ENCODE measurements at regions of chr4 and their contacts with region 1.

Region 1: DNA sequence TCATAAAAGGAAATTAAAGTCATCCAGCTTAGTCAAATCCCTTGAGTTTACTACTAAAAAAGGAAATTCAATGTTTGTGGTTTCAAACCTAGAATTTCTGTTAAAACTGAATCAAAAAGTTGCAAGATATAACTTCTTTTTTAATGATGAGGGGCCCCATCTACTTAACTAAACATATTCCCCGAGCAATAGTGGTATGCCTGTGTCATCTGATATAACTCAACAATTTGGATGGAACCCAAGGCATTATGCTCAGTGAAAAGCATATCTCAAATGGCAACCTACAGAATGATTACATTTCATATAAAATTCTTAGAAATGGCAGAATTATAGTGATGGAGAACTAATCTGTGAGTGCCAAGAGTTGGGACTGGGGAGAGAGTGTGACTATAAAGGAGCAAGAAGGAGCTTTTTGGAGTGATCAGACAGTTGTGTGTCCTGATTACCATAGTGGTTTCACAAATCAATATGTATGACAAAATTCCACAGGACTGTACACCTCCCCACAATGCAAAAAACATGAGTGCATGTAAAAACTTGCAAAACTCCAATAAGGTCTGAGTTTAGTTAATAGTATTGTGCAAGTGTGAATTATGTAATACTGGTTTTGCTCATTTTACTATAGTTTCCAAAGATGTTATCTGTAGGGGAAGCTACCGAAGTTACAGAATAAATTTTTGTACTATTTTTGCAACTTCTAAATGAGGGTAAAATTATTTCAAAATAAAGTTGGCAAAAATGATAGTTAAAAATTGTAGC is 323.2 kb downstream of the ARHGAP24 start:
- DNase-seq: peak; percentile 65
- H3K4me3 Mint-ChIP-seq: no peak overlapping the region
- H3K27ac Mint-ChIP-seq: no peak overlapping the region
- H3K4me1 Mint-ChIP-seq: peaks cover 7% of the 10 kb centered on the region
- H3K27me3 Mint-ChIP-seq: no peaks in the 10 kb centered on the region
- CTCF ChIP-seq: no peak

Region 2: GRCh38 chr4:85457752-85458467 is 340.3 kb before region 1 on chr4:
- CTCF ChIA-PET with region 1: no interaction called
- POLR2A ChIA-PET with region 1: no interaction called
- intact Hi-C with region 1: no loop called
- DNase-seq: no peak
- H3K4me3 Mint-ChIP-seq: no peak overlapping the region
- H3K27ac Mint-ChIP-seq: no peak overlapping the region
- H3K4me1 Mint-ChIP-seq: no peaks in the 10 kb centered on the region
- H3K27me3 Mint-ChIP-seq: no peaks in the 10 kb centered on the region
- CTCF ChIP-seq: no peak

Region 3: DNA sequence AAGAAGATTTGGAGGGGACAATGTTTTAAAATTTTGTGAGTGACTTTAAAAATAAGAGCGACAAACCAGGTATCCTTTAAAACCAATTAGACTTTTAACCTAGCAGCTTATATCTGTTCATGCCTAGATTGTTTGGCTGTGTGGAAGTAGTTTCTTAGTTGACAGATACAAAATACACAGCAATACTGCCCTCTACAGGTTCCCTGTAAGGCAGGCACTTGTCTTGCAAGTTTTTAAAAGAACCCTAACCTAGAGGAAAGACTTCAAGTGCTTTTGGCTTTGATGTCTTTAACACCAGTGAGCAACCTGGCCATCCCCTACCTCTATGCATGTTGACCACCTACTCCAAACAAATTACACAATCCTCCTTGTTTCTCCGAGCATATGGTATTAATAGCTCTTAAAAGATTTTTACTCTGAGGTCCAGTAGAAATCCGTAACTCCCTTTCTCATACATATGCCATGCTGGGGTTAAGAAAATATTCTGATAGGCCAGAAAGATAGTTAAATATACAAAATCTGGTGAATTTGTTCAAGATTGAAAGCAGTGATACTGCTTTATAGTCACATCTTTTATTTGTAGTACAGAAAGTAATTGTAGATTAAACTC is 50.2 kb before region 1 on chr4:
- CTCF ChIA-PET with region 1: interaction called, 18 read pairs
- POLR2A ChIA-PET with region 1: no interaction called
- intact Hi-C with region 1: no loop called
- DNase-seq: peak; percentile 73
- H3K4me3 Mint-ChIP-seq: no peak overlapping the region
- H3K27ac Mint-ChIP-seq: no peak overlapping the region
- H3K4me1 Mint-ChIP-seq: peaks cover 26% of the 10 kb centered on the region
- H3K27me3 Mint-ChIP-seq: no peaks in the 10 kb centered on the region
- CTCF ChIP-seq: peak; percentile 78

Region 4: GRCh38 chr4:85778632-85779131 is 19.5 kb before region 1 on chr4:
- CTCF ChIA-PET with region 1: interaction called, 34 read pairs
- POLR2A ChIA-PET with region 1: interaction called, 5 read pairs
- intact Hi-C with region 1: no loop called
- DNase-seq: peak; percentile 34
- H3K4me3 Mint-ChIP-seq: peak overlapping the region; percentile 66
- H3K27ac Mint-ChIP-seq: peak overlapping the region; percentile 93
- H3K4me1 Mint-ChIP-seq: peaks cover 21% of the 10 kb centered on the region
- H3K27me3 Mint-ChIP-seq: no peaks in the 10 kb centered on the region
- CTCF ChIP-seq: no peak

Region 5: DNA sequence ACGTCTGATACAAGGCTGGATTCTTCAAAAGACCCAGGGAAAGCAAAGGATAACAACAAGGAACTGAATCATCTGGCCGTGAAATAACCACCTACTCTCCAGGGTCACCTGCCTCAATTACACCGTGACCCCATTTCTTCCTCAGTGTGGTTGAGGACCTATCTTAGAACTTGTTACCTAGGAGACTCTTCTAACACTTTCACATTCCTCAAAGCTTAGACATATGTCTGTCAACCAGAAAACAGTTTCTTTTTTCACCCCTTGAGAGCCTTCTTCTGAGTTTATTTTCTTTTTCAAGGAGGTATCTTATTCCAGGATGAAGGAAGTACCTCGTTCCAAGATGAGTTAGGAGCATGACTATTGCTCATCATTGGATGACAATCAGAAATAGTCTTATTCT is 14.6 kb after region 1 on chr4:
- CTCF ChIA-PET with region 1: interaction called, 14 read pairs
- POLR2A ChIA-PET with region 1: interaction called, 4 read pairs
- intact Hi-C with region 1: no loop called
- DNase-seq: no peak
- H3K4me3 Mint-ChIP-seq: no peak overlapping the region
- H3K27ac Mint-ChIP-seq: no peak overlapping the region
- H3K4me1 Mint-ChIP-seq: peaks cover 13% of the 10 kb centered on the region
- H3K27me3 Mint-ChIP-seq: no peaks in the 10 kb centered on the region
- CTCF ChIP-seq: no peak

Region 6: DNA sequence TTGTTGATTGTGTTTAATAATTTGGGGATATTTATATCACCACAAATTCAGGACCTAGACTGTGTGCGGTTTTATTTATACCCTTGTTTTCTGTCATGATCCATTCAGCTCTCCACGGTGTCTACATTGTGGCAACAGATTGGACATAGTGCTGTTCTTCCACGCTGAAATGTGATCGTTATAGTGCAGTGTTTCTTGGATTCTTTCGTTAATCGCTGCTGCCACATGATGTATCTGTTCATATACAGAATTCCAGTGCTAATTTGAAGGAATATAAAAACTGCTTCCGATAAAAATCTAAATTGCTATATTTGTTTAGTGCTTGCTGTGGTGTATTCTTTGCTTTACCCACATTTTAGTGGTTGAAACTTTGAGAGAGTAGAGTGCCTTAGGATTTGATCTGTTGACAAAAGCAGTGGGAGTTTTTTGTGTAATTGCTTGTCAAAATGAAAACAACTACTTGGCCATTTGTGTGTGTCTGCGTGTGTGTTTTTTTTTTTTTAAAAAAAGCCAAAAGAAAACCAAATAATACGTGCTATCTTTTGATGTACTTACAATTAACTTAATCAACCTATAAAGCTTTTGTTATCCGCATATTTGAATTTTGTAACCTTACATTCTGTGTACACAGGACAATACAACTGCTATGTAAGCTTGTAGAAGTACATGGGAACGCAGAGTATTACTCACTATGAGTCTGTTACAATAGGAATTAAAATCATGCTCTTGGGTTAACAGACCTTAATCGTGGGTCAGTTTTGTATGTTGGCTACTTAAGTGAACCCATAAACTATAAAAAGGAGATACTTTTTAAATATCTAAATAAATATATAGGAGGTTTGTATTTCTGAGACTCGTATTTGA is 30.1 kb after region 1 on chr4:
- CTCF ChIA-PET with region 1: interaction called, 13 read pairs
- POLR2A ChIA-PET with region 1: interaction called, 3 read pairs
- intact Hi-C with region 1: no loop called
- DNase-seq: peak; percentile 34
- H3K4me3 Mint-ChIP-seq: peak overlapping the region; percentile 54
- H3K27ac Mint-ChIP-seq: peak overlapping the region; percentile 75
- H3K4me1 Mint-ChIP-seq: peaks cover 53% of the 10 kb centered on the region
- H3K27me3 Mint-ChIP-seq: no peaks in the 10 kb centered on the region
- CTCF ChIP-seq: no peak

Region 7: GRCh38 chr4:86032476-86033022 is 234.4 kb after region 1 on chr4:
- CTCF ChIA-PET with region 1: interaction called, 22 read pairs
- POLR2A ChIA-PET with region 1: interaction called, 3 read pairs
- intact Hi-C with region 1: no loop called
- DNase-seq: peak; percentile 96
- H3K4me3 Mint-ChIP-seq: peak overlapping the region; percentile 49
- H3K27ac Mint-ChIP-seq: peak overlapping the region; percentile 81
- H3K4me1 Mint-ChIP-seq: peaks cover 43% of the 10 kb centered on the region
- H3K27me3 Mint-ChIP-seq: no peaks in the 10 kb centered on the region
- CTCF ChIP-seq: no peak

Region 8: GRCh38 chr4:86174496-86174895 is 376.3 kb after region 1 on chr4:
- CTCF ChIA-PET with region 1: no interaction called
- POLR2A ChIA-PET with region 1: no interaction called
- intact Hi-C with region 1: no loop called
- DNase-seq: peak; percentile 5
- H3K4me3 Mint-ChIP-seq: no peak overlapping the region
- H3K27ac Mint-ChIP-seq: no peak overlapping the region
- H3K4me1 Mint-ChIP-seq: no peaks in the 10 kb centered on the region
- H3K27me3 Mint-ChIP-seq: no peaks in the 10 kb centered on the region
- CTCF ChIP-seq: no peak

Region 9: GRCh38 chr4:86223472-86223871 is 425.3 kb after region 1 on chr4:
- CTCF ChIA-PET with region 1: interaction called, 12 read pairs
- POLR2A ChIA-PET with region 1: no interaction called
- intact Hi-C with region 1: loop called (anchors 1 kb)
- DNase-seq: peak; percentile 63
- H3K4me3 Mint-ChIP-seq: no peak overlapping the region
- H3K27ac Mint-ChIP-seq: peak overlapping the region; percentile 41
- H3K4me1 Mint-ChIP-seq: peaks cover 20% of the 10 kb centered on the region
- H3K27me3 Mint-ChIP-seq: no peaks in the 10 kb centered on the region
- CTCF ChIP-seq: peak; percentile 61

Measured in MCF 10A (cell line).